ENCODE measurements at regions of chr5 and their contacts with region 1.

Region 1: DNA sequence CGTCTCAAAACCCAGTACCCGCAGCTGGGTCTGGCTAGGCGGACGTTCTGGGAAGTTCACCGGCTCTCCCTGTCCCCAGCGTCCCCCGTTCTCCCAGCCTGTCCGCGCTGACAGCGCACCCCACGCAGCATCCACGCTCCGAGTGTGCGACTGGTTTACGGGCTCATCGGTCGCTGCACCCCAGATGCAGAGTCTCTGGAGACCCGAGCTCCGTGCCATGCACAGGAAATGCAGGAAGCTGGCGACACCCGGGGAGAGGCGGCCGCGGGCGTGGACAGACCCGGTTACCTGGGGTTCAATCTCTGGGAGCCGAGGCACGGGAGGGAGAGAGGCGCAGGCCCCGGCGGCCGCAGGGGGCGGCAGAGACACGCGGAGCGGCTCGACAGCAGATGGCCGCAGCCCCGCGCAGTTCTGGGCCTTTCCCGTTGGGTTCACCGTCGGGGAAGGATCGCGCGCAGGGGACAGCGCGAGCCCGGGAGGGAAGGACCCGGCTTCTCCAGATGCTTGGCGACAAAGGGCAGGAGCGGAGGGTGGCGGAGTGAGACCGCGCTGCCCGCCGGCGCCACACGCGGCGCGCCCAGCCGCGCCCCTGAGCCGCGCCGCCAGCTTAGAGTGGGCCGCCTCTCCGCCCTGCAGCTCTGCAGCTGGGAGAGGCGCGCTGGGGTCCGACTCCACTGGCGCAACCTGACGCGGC is 558 bp downstream of the SHROOM1 start:
- DNase-seq: peak; percentile 87
- ATAC-seq: peak; percentile 91

Region 2: GRCh38 chr5:132866342-132867045 is 36.6 kb after region 1 on chr5 and contains the starts of genes GDF9 and UQCRQ:
- intact Hi-C with region 1: loop called (anchors 1 kb)
- DNase-seq: peak; percentile 95
- ATAC-seq: peak; percentile 99
- total RNA-seq, gene GDF9: 0.24 TPM
- total RNA-seq, gene UQCRQ: 1,774 TPM

Region 3: GRCh38 chr5:132883261-132883834 is 53.5 kb after region 1 on chr5:
- intact Hi-C with region 1: loop called (anchors 1 kb)
- DNase-seq: no peak
- ATAC-seq: peak; percentile 86